ENCODE measurements at regions of chr6 and their contacts with region 1.

Region 1: GRCh38 chr6:8983188-8983688 is 547.9 kb upstream of the SLC35B3 start:
- DNase-seq: peak; percentile 32
- H3K4me3 Mint-ChIP-seq: no peak overlapping the region
- H3K27ac Mint-ChIP-seq: no peak overlapping the region
- H3K4me1 Mint-ChIP-seq: no peaks in the 10 kb centered on the region
- H3K27me3 Mint-ChIP-seq: peaks cover 3% of the 10 kb centered on the region

Region 2: DNA sequence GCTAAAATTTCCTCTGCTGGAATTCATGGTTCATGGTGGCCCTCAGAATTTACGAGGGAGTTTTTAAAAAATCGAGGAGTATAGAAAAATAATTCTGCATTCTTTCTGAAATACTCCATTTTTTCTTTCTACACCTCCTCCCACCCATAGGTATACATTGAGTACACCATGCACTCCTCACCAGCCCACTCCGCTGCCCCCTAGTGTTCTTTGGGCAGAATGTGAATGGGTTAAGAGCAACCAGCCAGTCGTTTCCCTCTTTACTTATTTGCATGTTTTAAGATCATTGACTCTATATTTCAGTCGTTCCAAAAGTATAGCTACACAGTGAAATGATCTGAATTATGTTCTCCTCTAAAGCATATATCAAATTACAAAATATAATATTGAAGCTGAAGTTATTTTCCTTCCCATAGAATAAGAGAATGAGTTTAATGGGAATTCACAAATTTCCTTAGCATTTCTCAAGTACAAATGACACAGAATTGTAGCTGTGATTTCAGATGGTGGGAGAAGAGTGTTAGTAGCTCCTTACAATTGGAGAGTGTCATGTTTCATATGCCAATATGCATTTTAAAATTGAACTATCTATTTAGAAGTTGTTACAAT is 429.8 kb after region 1 on chr6:
- intact Hi-C with region 1: loop called (anchors 5 kb)
- DNase-seq: no peak
- H3K4me3 Mint-ChIP-seq: no peak overlapping the region
- H3K27ac Mint-ChIP-seq: no peak overlapping the region
- H3K4me1 Mint-ChIP-seq: no peaks in the 10 kb centered on the region
- H3K27me3 Mint-ChIP-seq: no peaks in the 10 kb centered on the region

Measured in activated T-helper 1 cell treated with anti-CD3 and anti-CD28 coated beads, Interleukin-12 subunit alpha, Interleukin-12 subunit beta, Interleukin-2, Interleukin-4 antibody, amounts not matched to agents 30 ng/mL and 10 ng/mL and 1 ng/mL, durations not matched to agents 14 hours and 24 hours and 36 hours (primary cell).